Activated CD8-positive, alpha-beta T cell treated with anti-CD3 and anti-CD28 coated beads for 36 hours (primary cell): ENCODE measurements at regions of chr10 and their contacts with region 1.

Region 1: GRCh38 chr10:91632671-91633550 is at the start of gene PPP1R3C:
- DNase-seq: peak; percentile 70
- ATAC-seq: peak; percentile 87
- H3K4me3 Mint-ChIP-seq: peak within 1 kb of the TSS; percentile 70
- H3K27ac Mint-ChIP-seq: no peak within 1 kb of the TSS
- H3K4me1 Mint-ChIP-seq: peaks cover 4% of the 10 kb centered on the region
- H3K27me3 Mint-ChIP-seq: peaks cover 55% of the 10 kb centered on the region
- CTCF ChIP-seq: no peak
- total RNA-seq, gene PPP1R3C: 0.94 to 0.99 TPM

Region 2: DNA sequence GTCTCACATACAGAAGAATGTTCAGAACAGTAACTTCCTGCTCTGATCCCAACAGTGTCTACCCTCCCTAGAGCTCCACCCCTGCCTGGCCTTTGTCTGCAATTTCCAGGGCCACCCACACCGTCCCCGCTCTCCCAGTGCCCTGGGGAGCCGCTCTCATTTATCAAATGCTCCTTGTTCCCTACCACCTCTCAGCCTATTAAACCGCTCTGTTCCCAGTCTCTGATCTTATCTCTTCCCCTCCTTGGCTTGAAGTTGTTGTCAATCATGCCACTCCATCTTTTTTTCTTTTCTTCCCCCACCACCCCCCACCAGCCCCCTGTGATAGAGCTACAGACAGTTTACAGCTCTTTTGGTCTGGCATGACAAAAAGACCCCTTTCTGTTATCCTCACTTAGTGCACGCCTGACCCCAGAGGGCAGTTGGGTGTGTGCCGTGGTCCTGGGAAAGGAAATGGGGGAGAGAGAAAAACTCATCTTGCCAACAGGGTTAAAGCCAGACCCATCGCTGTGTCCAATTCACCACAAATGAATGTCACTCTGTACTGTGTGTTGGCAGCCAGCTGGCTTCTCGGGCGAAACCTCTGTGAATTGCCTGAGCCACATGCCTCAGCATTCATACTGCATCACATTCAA is 251.5 kb before region 1 on chr10:
- CTCF ChIA-PET with region 1: interaction called, 22 read pairs
- POLR2A ChIA-PET with region 1: no interaction called
- intact Hi-C with region 1: loop called (anchors 5 kb)
- DNase-seq: no peak
- ATAC-seq: no peak
- H3K4me3 Mint-ChIP-seq: no peak overlapping the region
- H3K27ac Mint-ChIP-seq: no peak overlapping the region
- H3K4me1 Mint-ChIP-seq: peaks cover 26% of the 10 kb centered on the region
- H3K27me3 Mint-ChIP-seq: peaks cover 34% of the 10 kb centered on the region
- CTCF ChIP-seq: no peak

Region 3: GRCh38 chr10:91389636-91390512 is 243.0 kb before region 1 on chr10:
- CTCF ChIA-PET with region 1: interaction called, 22 read pairs
- POLR2A ChIA-PET with region 1: interaction called, 3 read pairs
- intact Hi-C with region 1: loop called (anchors 5 kb)
- DNase-seq: no peak
- ATAC-seq: peak; percentile 87
- H3K4me3 Mint-ChIP-seq: no peak overlapping the region
- H3K27ac Mint-ChIP-seq: no peak overlapping the region
- H3K4me1 Mint-ChIP-seq: peaks cover 5% of the 10 kb centered on the region
- H3K27me3 Mint-ChIP-seq: peaks cover 24% of the 10 kb centered on the region
- CTCF ChIP-seq: peak; percentile 76

Region 4: DNA sequence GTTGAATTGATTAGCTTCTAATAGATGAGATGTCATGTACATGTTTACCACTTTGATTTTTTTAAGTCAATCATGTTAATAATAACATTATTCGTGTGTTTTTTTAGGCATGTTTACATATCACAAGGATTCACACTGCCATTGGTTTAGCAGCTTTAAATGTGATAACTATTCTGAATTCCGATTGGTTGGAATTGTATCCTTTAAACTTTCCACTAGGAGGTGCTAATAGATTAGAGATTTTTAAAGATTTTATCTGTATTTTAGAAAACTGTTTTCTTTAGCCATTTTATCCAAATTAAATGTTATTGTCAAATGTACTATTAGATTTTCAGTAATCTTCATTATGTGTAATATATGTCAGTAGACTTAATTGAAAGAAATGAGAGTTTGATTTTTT is 139.6 kb before region 1 on chr10:
- CTCF ChIA-PET with region 1: interaction called, 21 read pairs
- POLR2A ChIA-PET with region 1: no interaction called
- intact Hi-C with region 1: no loop called
- DNase-seq: no peak
- ATAC-seq: no peak
- H3K4me3 Mint-ChIP-seq: no peak overlapping the region
- H3K27ac Mint-ChIP-seq: no peak overlapping the region
- H3K4me1 Mint-ChIP-seq: no peaks in the 10 kb centered on the region
- H3K27me3 Mint-ChIP-seq: no peaks in the 10 kb centered on the region
- CTCF ChIP-seq: no peak

Region 5: GRCh38 chr10:91621483-91622113 is 11.3 kb before region 1 on chr10:
- CTCF ChIA-PET with region 1: interaction called, 16 read pairs
- POLR2A ChIA-PET with region 1: no interaction called
- intact Hi-C with region 1: no loop called
- DNase-seq: no peak
- ATAC-seq: no peak
- H3K4me3 Mint-ChIP-seq: no peak overlapping the region
- H3K27ac Mint-ChIP-seq: no peak overlapping the region
- H3K4me1 Mint-ChIP-seq: no peaks in the 10 kb centered on the region
- H3K27me3 Mint-ChIP-seq: peaks cover 25% of the 10 kb centered on the region
- CTCF ChIP-seq: no peak

Region 6: GRCh38 chr10:91643700-91644099 is 10.8 kb after region 1 on chr10:
- CTCF ChIA-PET with region 1: interaction called, 10 read pairs
- POLR2A ChIA-PET with region 1: interaction called, 3 read pairs
- intact Hi-C with region 1: no loop called
- DNase-seq: no peak
- ATAC-seq: no peak
- H3K4me3 Mint-ChIP-seq: no peak overlapping the region
- H3K27ac Mint-ChIP-seq: no peak overlapping the region
- H3K4me1 Mint-ChIP-seq: no peaks in the 10 kb centered on the region
- H3K27me3 Mint-ChIP-seq: peaks cover 30% of the 10 kb centered on the region
- CTCF ChIP-seq: no peak

Region 7: GRCh38 chr10:91694170-91694794 is 61.4 kb after region 1 on chr10:
- CTCF ChIA-PET with region 1: interaction called, 10 read pairs
- POLR2A ChIA-PET with region 1: no interaction called
- intact Hi-C with region 1: no loop called
- DNase-seq: peak; percentile 32
- ATAC-seq: peak; percentile 45
- H3K4me3 Mint-ChIP-seq: no peak overlapping the region
- H3K27ac Mint-ChIP-seq: no peak overlapping the region
- H3K4me1 Mint-ChIP-seq: peaks cover 4% of the 10 kb centered on the region
- H3K27me3 Mint-ChIP-seq: peaks cover 4% of the 10 kb centered on the region
- CTCF ChIP-seq: peak; percentile 71

Region 8: GRCh38 chr10:91838199-91838598 is 205.3 kb after region 1 on chr10:
- CTCF ChIA-PET with region 1: no interaction called
- POLR2A ChIA-PET with region 1: no interaction called
- intact Hi-C with region 1: no loop called
- DNase-seq: no peak
- ATAC-seq: no peak
- H3K4me3 Mint-ChIP-seq: no peak overlapping the region
- H3K27ac Mint-ChIP-seq: no peak overlapping the region
- H3K4me1 Mint-ChIP-seq: no peaks in the 10 kb centered on the region
- H3K27me3 Mint-ChIP-seq: no peaks in the 10 kb centered on the region
- CTCF ChIP-seq: no peak